Activated CD4-positive, alpha-beta T cell treated with anti-CD3 and anti-CD28 coated beads, Interleukin-2, amount 10 ng/mL, durations not matched to agents 7 days and 5 days (primary cell): ENCODE measurements at regions of chr14 and their contacts with region 1.

Region 1: GRCh38 chr14:35883677-35884293 is 57.6 kb downstream of the BRMS1L start:
- DNase-seq: peak; percentile 45
- H3K4me3 Mint-ChIP-seq: no peak overlapping the region
- H3K27ac Mint-ChIP-seq: no peak overlapping the region
- H3K4me1 Mint-ChIP-seq: no peaks in the 10 kb centered on the region
- H3K27me3 Mint-ChIP-seq: peaks cover 3% of the 10 kb centered on the region

Region 2: DNA sequence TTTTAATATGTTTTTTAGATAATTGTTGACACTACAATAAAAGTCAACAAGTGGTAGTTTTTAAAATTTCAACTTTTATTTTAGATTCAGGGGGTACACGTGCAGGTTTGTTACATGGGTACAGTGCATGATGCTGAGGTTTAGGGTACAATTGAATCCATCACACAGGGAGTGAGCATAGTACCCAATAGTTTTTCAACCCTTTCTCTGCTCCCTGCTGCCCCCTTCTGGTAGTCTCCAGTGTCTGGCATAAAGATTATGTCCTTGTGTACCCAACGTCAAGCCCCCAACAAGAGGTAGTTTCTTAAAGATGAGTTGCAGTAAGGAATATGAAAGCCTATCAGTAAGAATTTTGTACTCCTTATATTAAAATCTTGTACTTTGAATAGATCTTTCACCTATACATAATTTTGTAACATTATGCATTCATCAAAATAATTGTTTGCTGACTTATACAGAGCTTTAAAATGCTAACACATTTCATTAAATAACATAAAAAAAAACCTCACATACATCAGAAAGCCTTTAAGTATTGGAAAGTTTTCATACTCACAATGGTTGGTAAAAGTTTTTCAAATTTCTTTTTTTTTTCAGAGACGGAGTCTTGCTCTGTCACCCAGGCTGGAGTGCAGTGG is 69.3 kb before region 1 on chr14:
- CTCF ChIA-PET with region 1: no interaction called
- POLR2A ChIA-PET with region 1: no interaction called
- DNase-seq: peak; percentile 88
- H3K4me3 Mint-ChIP-seq: no peak overlapping the region
- H3K27ac Mint-ChIP-seq: no peak overlapping the region
- H3K4me1 Mint-ChIP-seq: no peaks in the 10 kb centered on the region
- H3K27me3 Mint-ChIP-seq: no peaks in the 10 kb centered on the region

Region 3: GRCh38 chr14:35898217-35898775 is 14.5 kb after region 1 on chr14:
- CTCF ChIA-PET with region 1: no interaction called
- POLR2A ChIA-PET with region 1: no interaction called
- DNase-seq: no peak
- H3K4me3 Mint-ChIP-seq: no peak overlapping the region
- H3K27ac Mint-ChIP-seq: no peak overlapping the region
- H3K4me1 Mint-ChIP-seq: no peaks in the 10 kb centered on the region
- H3K27me3 Mint-ChIP-seq: peaks cover 16% of the 10 kb centered on the region

Region 4: GRCh38 chr14:36070031-36070719 is 186.4 kb after region 1 on chr14:
- CTCF ChIA-PET with region 1: interaction called, 11 read pairs
- POLR2A ChIA-PET with region 1: no interaction called
- DNase-seq: peak; percentile 55
- H3K4me3 Mint-ChIP-seq: no peak overlapping the region
- H3K27ac Mint-ChIP-seq: no peak overlapping the region
- H3K4me1 Mint-ChIP-seq: no peaks in the 10 kb centered on the region
- H3K27me3 Mint-ChIP-seq: peaks cover 20% of the 10 kb centered on the region